PC-3 (cell line): ENCODE measurements at regions of chr17 and their contacts with region 1.

Region 1: DNA sequence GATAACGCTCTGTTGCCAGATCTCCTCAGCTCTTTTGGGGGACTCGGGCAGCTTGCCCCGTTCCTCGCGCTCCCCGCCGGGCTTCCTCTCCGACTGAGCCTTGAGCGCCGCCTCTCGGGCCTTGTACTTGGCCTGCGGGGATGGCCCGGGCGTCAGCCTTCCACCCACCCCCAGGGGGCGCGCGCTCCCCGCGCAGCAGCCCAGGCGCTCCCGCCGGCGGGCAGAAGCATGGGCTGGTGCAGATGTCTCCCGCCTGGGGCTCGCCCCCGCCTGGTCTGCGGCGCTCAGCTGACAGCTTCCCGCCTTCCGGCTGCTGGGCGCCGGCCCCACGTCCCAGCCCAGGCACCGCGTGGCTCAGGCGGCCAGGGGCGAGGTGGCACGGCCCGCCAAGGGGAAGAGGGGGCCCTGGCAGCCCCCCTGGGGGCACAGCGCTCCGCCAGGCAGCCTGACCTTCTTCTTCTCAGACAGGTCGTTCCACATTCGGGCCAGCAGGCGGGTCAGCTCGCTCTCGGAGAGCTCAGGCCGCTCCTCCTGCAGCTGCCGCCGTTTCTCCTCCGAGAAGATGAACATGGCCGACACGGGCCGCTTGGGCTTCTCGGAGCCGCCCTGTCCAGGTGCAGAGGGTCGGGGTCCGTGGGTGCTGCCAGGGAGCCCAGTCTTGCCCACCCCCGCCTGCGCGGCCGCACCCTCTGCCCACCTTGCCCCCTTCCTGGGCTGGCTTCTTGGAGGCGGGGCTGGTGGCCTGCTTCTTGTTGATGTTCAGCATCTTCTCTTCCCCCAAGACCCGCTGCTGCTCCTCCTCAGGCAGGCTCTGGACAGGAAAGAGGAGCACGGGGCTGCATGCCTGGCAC is 8.9 kb downstream of the UBTF start:
- DNase-seq: peak; percentile 85
- ATAC-seq: peak; percentile 81
- H3K4me3 ChIP-seq: no peak overlapping the region
- H3K27ac ChIP-seq: peak overlapping the region; percentile 67
- H3K4me1 ChIP-seq: peaks cover 31% of the 10 kb centered on the region
- H3K27me3 ChIP-seq: no peaks in the 10 kb centered on the region
- CTCF ChIP-seq: peak; percentile 98

Region 2: GRCh38 chr17:44141717-44142285 is 68.8 kb before region 1 on chr17 and contains the start of gene HROB:
- CTCF ChIA-PET with region 1: no interaction called
- POLR2A ChIA-PET with region 1: no interaction called
- intact Hi-C with region 1: no loop called
- DNase-seq: peak; percentile 100
- ATAC-seq: peak; percentile 53
- H3K4me3 ChIP-seq: peak within 1 kb of the TSS; percentile 89
- H3K27ac ChIP-seq: peak within 1 kb of the TSS; percentile 81
- H3K4me1 ChIP-seq: peaks cover 33% of the 10 kb centered on the region
- H3K27me3 ChIP-seq: no peaks in the 10 kb centered on the region
- CTCF ChIP-seq: peak; percentile 88
- total RNA-seq, gene HROB: 13.5 and 14.3 TPM in 2 replicates

Region 3: DNA sequence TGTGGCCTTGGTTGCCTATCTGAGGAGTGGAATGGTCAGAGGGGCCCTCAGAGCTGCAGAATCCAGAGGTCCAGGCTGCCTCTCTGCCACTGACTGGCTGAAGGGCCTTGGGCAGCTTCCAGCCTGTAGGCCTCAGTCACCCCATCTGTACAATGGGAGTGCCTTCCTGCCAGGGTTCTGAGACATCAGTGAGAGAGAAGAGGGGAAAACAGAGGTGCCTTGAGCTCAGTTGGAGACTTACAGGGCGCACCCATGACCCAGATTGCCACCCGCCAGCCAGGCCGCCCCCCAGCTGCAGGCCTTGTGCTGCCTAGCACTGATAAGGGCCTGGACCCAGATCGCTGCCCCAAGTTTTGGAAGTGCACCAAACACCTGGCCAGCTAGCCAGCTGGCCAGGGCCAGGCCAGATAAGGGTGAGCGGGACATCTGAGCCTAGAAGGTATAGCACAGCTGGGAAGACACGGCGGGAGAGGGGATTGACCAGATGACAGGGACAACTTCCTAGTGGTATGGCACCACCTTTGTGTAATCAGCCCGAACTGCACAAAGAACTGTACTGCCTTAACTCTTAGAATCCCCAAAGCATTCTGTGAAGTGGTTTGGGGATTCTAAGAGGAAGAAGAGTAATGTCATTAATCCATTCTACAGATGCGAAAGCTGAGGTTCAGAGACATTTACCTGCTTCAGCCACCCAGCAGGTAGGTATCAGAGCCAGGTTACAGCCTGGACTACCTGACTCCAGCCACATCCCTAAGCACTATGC is 56.0 kb after region 1 on chr17:
- CTCF ChIA-PET with region 1: no interaction called
- POLR2A ChIA-PET with region 1: no interaction called
- intact Hi-C with region 1: no loop called
- DNase-seq: peak; percentile 25
- ATAC-seq: peak; percentile 43; the same call in 1 of the 2 replicates
- H3K4me3 ChIP-seq: no peak overlapping the region
- H3K27ac ChIP-seq: no peak overlapping the region
- H3K4me1 ChIP-seq: no peaks in the 10 kb centered on the region
- H3K27me3 ChIP-seq: no peaks in the 10 kb centered on the region
- CTCF ChIP-seq: peak; percentile 29; the same call in 1 of the 2 replicates

Region 4: GRCh38 chr17:44331249-44331760 is 120.7 kb after region 1 on chr17:
- CTCF ChIA-PET with region 1: interaction called, 4 read pairs
- POLR2A ChIA-PET with region 1: no interaction called
- intact Hi-C with region 1: loop called (anchors 1 kb)
- DNase-seq: peak; percentile 97
- ATAC-seq: peak; percentile 53
- H3K4me3 ChIP-seq: no peak overlapping the region
- H3K27ac ChIP-seq: no peak overlapping the region
- H3K4me1 ChIP-seq: no peaks in the 10 kb centered on the region
- H3K27me3 ChIP-seq: no peaks in the 10 kb centered on the region
- CTCF ChIP-seq: peak; percentile 97

Region 5: GRCh38 chr17:44351464-44351863 is 140.9 kb after region 1 on chr17:
- CTCF ChIA-PET with region 1: interaction called, 13 read pairs
- POLR2A ChIA-PET with region 1: no interaction called
- intact Hi-C with region 1: no loop called
- DNase-seq: no peak
- ATAC-seq: no peak
- H3K4me3 ChIP-seq: no peak overlapping the region
- H3K27ac ChIP-seq: no peak overlapping the region
- H3K4me1 ChIP-seq: no peaks in the 10 kb centered on the region; the same call in 1 of the 2 replicates
- H3K27me3 ChIP-seq: no peaks in the 10 kb centered on the region
- CTCF ChIP-seq: no peak